CD4-positive, alpha-beta T cell (primary cell): ENCODE measurements at regions of chr5 and their contacts with region 1.

Region 1: GRCh38 chr5:181191529-181192394 is 13.2 kb downstream of the TRIM7 start:
- DNase-seq: peak; percentile 88 to 99 (median 96)
- ATAC-seq: peak; percentile 45
- H3K4me3 ChIP-seq: peak overlapping the region; percentile 89
- H3K4me3 Mint-ChIP-seq: peak overlapping the region; percentile 99
- H3K27ac ChIP-seq: peak overlapping the region; percentile 52 to 62
- H3K27ac Mint-ChIP-seq: peak overlapping the region; percentile 99
- H3K4me1 ChIP-seq: peaks cover 46% of the 10 kb centered on the region
- H3K4me1 Mint-ChIP-seq: peaks cover 47% of the 10 kb centered on the region
- H3K27me3 ChIP-seq: no peaks in the 10 kb centered on the region
- H3K27me3 Mint-ChIP-seq: peaks cover 35% of the 10 kb centered on the region
- CTCF ChIP-seq: no peak

Region 2: GRCh38 chr5:181173420-181174342 is 18.1 kb before region 1 on chr5:
- CTCF ChIA-PET with region 1: interaction called, 3 read pairs
- POLR2A ChIA-PET with region 1: interaction called, 61 read pairs
- intact Hi-C with region 1: loop called (anchors 1 to 2 kb)
- DNase-seq: peak in 9 of 14 experiments; percentile 17 to 76 (median 55)
- ATAC-seq: peak; percentile 84
- H3K4me3 ChIP-seq: peak overlapping the region; percentile 25
- H3K4me3 Mint-ChIP-seq: peak overlapping the region; percentile 92
- H3K27ac ChIP-seq: no peak overlapping the region
- H3K27ac Mint-ChIP-seq: peak overlapping the region; percentile 78
- H3K4me1 ChIP-seq: peaks cover 33% of the 10 kb centered on the region
- H3K4me1 Mint-ChIP-seq: peaks cover 44% of the 10 kb centered on the region
- H3K27me3 ChIP-seq: peaks cover 21 to 45% of the 10 kb centered on the region in 2 experiments
- H3K27me3 Mint-ChIP-seq: peaks cover 44% of the 10 kb centered on the region
- CTCF ChIP-seq: peak; percentile 10

Region 3: DNA sequence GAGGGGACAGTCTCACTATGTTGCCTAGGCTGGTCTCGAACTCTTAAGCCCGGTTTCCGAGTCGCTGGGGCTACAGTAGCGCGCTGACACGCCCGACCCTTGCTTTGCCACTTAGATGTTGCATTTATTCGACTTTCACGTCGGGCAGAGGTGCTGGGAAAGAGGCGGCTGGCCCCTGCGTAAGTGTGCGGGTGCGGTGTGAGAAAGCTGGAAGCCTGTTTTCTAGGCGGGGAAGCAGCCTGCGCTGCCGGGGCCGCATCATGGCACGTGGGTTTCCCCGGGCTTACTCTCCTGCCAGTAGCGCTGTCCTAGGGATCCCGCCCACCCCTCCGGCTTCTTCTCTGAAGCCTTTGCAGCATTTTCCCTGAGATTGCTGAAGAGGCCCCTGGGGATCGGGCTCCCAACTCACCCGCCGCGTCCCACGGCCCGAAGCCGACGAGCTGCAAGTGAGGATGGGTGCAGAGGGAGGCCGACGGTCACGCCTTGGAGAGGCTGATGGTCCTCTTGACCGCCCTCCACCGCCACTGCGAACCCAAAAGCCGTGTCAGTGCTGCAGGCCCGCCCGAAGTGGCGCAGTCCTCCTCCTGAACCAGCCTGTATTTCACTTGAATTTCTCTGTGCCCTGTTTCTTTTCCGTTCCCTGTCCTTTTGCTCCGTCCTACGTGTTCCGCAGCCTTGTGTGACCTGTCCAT is 25.5 kb after region 1 on chr5:
- CTCF ChIA-PET with region 1: interaction called, 5 read pairs
- POLR2A ChIA-PET with region 1: interaction called, 187 read pairs
- intact Hi-C with region 1: loop called (anchors 1 kb)
- DNase-seq: peak; percentile 36 to 87 (median 61)
- ATAC-seq: peak; percentile 31
- H3K4me3 ChIP-seq: peak overlapping the region; percentile 81
- H3K4me3 Mint-ChIP-seq: peak overlapping the region; percentile 97
- H3K27ac ChIP-seq: peak overlapping the region; percentile 39 to 41
- H3K27ac Mint-ChIP-seq: peak overlapping the region; percentile 88
- H3K4me1 ChIP-seq: peaks cover 56% of the 10 kb centered on the region
- H3K4me1 Mint-ChIP-seq: peaks cover 41% of the 10 kb centered on the region
- H3K27me3 ChIP-seq: no peaks in the 10 kb centered on the region
- H3K27me3 Mint-ChIP-seq: peaks cover 20% of the 10 kb centered on the region
- CTCF ChIP-seq: no peak

Region 4: GRCh38 chr5:181223058-181223728 is 31.4 kb after region 1 on chr5 and contains the start of gene TRIM41:
- CTCF ChIA-PET with region 1: interaction called, 5 read pairs
- POLR2A ChIA-PET with region 1: interaction called, 187 read pairs
- intact Hi-C with region 1: loop called in 1 of 2 experiments (anchors 1 kb)
- DNase-seq: peak; percentile 94 to 98 (median 97)
- ATAC-seq: peak; percentile 61
- H3K4me3 ChIP-seq: peak within 1 kb of the TSS; percentile 80
- H3K4me3 Mint-ChIP-seq: peak within 1 kb of the TSS; percentile 96
- H3K27ac ChIP-seq: peak within 1 kb of the TSS; percentile 97 to 99
- H3K27ac Mint-ChIP-seq: peak within 1 kb of the TSS; percentile 99
- H3K4me1 ChIP-seq: peaks cover 64% of the 10 kb centered on the region
- H3K4me1 Mint-ChIP-seq: peaks cover 51% of the 10 kb centered on the region
- H3K27me3 ChIP-seq: no peaks in the 10 kb centered on the region
- H3K27me3 Mint-ChIP-seq: peaks cover 23% of the 10 kb centered on the region
- CTCF ChIP-seq: no peak
- total RNA-seq, gene TRIM41: 21.4 to 24.0 TPM

Region 5: GRCh38 chr5:181243512-181244343 is 52.0 kb after region 1 on chr5 and contains the start of gene RACK1:
- CTCF ChIA-PET with region 1: interaction called, 8 read pairs
- POLR2A ChIA-PET with region 1: interaction called, 37 read pairs
- intact Hi-C with region 1: no loop called
- DNase-seq: peak; percentile 84 to 95 (median 88)
- ATAC-seq: peak; percentile 75
- H3K4me3 ChIP-seq: peak within 1 kb of the TSS; percentile 94
- H3K4me3 Mint-ChIP-seq: peak within 1 kb of the TSS; percentile 95
- H3K27ac ChIP-seq: peak within 1 kb of the TSS; percentile 81 to 90
- H3K27ac Mint-ChIP-seq: peak within 1 kb of the TSS; percentile 96
- H3K4me1 ChIP-seq: peaks cover 87% of the 10 kb centered on the region
- H3K4me1 Mint-ChIP-seq: peaks cover 76% of the 10 kb centered on the region
- H3K27me3 ChIP-seq: no peaks in the 10 kb centered on the region
- H3K27me3 Mint-ChIP-seq: no peaks in the 10 kb centered on the region
- CTCF ChIP-seq: no peak
- total RNA-seq, gene RACK1: 2,499 to 2,682 TPM